Activated CD4-positive, alpha-beta memory T cell treated with anti-CD3 and anti-CD28 coated beads for 36 hours (primary cell): ENCODE measurements at regions of chr13 and their contacts with region 1.

Region 1: GRCh38 chr13:25819856-25820530 is 231.8 kb downstream of the SHISA2 start:
- DNase-seq: no peak
- H3K4me3 Mint-ChIP-seq: no peak overlapping the region
- H3K27ac Mint-ChIP-seq: no peak overlapping the region
- H3K4me1 Mint-ChIP-seq: no peaks in the 10 kb centered on the region
- H3K27me3 Mint-ChIP-seq: no peaks in the 10 kb centered on the region

Region 2: GRCh38 chr13:25585000-25585399 is 235.0 kb before region 1 on chr13:
- CTCF ChIA-PET with region 1: no interaction called
- POLR2A ChIA-PET with region 1: no interaction called
- intact Hi-C with region 1: loop called (anchors 10 kb)
- DNase-seq: no peak
- H3K4me3 Mint-ChIP-seq: no peak overlapping the region
- H3K27ac Mint-ChIP-seq: no peak overlapping the region
- H3K4me1 Mint-ChIP-seq: no peaks in the 10 kb centered on the region
- H3K27me3 Mint-ChIP-seq: peaks cover 21% of the 10 kb centered on the region

Region 3: GRCh38 chr13:26061947-26062346 is 242.0 kb after region 1 on chr13:
- CTCF ChIA-PET with region 1: no interaction called
- POLR2A ChIA-PET with region 1: no interaction called
- intact Hi-C with region 1: no loop called
- DNase-seq: no peak
- H3K4me3 Mint-ChIP-seq: no peak overlapping the region
- H3K27ac Mint-ChIP-seq: no peak overlapping the region
- H3K4me1 Mint-ChIP-seq: no peaks in the 10 kb centered on the region
- H3K27me3 Mint-ChIP-seq: peaks cover 1% of the 10 kb centered on the region